Activated CD8-positive, alpha-beta T cell treated with anti-CD3 and anti-CD28 coated beads, Interleukin-2, amount 10 ng/mL, durations not matched to agents 7 days and 5 days (primary cell): ENCODE measurements at regions of chr12 and their contacts with region 1.

Region 1: DNA sequence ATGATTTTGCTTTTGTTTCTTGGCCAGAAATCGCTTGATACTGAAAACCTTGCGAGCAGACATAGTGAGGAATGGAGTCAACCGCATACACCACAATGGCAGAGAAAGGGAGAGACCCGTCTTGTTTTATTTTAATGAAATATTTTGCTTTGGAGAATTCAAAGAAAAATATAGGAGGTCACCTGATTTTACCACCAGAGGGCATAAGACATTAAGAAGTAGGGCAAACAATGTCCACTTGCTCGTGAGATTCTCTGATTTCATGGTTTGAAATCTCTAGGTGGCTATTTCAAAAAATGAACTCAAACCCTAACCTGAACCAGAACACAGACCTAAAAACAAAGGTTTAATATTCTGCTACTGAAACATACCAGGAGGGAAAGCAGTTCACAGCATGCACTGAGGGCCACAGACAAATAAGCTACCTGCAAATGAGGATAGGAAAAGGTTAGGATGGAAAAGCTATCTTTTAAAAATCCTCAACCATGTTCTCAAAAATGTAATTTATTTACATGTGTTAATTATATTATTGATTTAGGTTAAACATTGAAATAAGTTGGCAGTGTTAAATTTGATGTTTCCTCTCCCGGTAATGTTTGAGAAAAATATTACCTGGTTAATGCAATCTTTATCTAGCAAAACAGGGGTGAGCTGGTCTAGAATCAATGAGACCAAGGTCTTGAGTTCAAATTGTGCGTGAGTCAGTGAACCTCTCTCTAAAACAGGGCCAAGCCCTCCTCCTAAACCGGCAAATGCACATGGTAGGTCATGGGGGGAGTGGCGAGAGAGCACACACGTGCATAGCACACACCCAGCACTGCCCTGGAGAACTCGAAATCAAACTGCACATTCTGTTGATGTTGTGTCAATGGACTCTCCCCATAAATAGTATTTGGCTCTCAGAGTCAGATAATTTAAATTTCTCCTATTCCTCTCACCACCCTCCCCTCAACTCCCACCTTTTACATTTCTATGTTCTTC is 12.5 kb downstream of the IFNG-AS1 start:
- DNase-seq: no peak
- ATAC-seq: no peak
- H3K4me3 Mint-ChIP-seq: no peak overlapping the region
- H3K27ac Mint-ChIP-seq: no peak overlapping the region
- H3K4me1 Mint-ChIP-seq: peaks cover 11% of the 10 kb centered on the region
- H3K27me3 Mint-ChIP-seq: no peaks in the 10 kb centered on the region

Region 2: DNA sequence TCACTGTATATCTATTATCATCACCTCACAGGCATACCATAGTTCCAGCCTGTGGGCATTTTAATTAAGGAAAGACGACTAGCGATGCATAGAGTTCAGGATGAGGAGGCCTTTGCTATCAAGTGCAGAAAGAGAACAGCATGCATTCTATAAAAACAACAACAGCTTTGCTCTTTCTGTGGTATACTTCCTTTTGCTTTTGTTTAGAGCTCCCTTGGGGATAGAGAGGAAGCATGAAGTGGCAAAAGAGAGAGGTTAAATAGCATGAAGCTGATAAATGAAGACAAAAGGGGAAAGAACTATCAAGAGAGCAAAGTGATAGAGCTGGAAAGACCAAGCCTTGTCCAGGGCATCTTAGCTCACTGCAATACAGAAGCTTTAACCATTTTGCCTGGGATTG is 10.9 kb after region 1 on chr12:
- CTCF ChIA-PET with region 1: interaction called, 23 read pairs
- POLR2A ChIA-PET with region 1: no interaction called
- DNase-seq: no peak
- ATAC-seq: no peak
- H3K4me3 Mint-ChIP-seq: no peak overlapping the region
- H3K27ac Mint-ChIP-seq: no peak overlapping the region
- H3K4me1 Mint-ChIP-seq: peaks cover 11% of the 10 kb centered on the region
- H3K27me3 Mint-ChIP-seq: no peaks in the 10 kb centered on the region